ENCODE measurements at regions of chr16 and their contacts with region 1.

Region 1: GRCh38 chr16:50024684-50025536 is at the start of gene CNEP1R1:
- DNase-seq: peak; percentile 99
- CTCF ChIP-seq: peak; percentile 100

Region 2: DNA sequence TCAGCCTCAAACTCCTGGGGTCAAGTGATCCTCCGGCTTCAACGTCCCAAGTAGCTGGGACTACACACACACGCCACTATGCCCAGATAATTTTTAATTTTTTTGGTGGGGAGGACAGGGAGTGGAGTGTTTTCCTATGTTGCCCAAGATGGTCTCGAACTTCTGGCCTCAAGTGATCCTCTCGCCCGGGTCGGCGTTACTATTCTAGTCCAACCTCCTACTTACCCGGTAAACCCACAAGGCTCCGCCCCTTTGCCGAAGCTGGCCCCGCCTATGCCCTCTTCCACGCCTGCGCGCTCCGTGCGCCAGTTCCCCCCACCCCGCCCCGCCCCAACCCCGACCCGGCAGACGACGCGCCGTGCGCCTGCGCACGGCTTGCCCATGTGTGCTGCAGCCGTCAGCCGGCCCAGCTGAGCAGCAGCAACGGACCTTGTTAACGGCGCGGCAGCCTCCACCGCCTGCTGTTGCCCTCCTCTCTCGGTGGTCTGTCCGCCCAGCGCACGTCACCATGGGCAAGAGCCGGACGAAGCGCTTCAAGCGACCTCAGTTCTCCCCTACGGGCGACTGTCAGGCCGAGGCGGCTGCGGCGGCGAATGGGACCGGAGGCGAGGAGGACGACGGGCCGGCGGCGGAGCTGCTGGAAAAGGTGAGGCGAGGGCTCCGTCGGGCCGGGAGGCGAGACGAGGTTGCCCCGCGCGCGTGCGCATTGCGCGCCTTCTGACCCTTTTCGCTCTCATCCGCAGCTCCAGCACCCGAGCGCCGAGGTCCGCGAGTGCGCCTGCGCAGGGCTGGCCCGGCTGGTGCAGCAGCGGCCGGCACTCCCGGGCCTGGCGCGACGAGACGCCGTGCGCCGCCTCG is 40.9 kb after region 1 on chr16 and contains the start of gene HEATR3:
- CTCF ChIA-PET with region 1: interaction called, 47 read pairs
- POLR2A ChIA-PET with region 1: no interaction called
- DNase-seq: peak; percentile 94
- CTCF ChIP-seq: no peak

Region 3: DNA sequence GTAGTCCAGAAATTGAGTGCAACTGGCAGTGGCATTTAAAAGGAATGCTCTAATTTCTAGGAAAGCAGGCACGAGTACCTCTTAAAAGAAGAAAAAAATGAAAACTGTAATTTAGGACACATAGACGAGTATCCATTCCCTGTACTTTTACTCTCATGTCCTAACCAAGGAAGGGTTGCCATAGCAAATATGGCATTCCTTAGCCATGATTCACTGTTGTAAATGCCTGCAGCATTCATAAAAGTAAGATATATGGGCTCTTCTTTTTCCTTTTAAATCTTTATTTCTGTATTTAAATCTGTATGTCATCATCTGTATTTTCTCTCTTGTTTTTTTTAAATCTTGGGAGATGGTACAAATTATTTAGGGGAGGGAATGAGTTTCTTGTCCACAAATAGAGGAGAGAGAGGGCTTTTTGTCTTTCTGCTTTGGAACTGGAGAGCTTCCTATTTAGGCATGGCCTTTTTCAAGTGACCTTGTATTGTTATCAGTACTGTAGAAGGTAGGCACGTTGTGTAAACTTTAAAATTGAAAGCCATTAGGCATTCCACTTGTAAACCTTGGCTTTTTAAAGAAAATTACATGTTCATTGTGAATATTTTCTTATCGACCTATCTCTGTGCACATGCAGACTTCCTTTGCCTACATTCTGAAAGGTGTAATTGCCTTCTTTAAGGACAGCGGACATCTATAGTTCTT is 178.2 kb after region 1 on chr16:
- CTCF ChIA-PET with region 1: interaction called, 177 read pairs
- POLR2A ChIA-PET with region 1: no interaction called
- DNase-seq: no peak
- CTCF ChIP-seq: no peak

Region 4: DNA sequence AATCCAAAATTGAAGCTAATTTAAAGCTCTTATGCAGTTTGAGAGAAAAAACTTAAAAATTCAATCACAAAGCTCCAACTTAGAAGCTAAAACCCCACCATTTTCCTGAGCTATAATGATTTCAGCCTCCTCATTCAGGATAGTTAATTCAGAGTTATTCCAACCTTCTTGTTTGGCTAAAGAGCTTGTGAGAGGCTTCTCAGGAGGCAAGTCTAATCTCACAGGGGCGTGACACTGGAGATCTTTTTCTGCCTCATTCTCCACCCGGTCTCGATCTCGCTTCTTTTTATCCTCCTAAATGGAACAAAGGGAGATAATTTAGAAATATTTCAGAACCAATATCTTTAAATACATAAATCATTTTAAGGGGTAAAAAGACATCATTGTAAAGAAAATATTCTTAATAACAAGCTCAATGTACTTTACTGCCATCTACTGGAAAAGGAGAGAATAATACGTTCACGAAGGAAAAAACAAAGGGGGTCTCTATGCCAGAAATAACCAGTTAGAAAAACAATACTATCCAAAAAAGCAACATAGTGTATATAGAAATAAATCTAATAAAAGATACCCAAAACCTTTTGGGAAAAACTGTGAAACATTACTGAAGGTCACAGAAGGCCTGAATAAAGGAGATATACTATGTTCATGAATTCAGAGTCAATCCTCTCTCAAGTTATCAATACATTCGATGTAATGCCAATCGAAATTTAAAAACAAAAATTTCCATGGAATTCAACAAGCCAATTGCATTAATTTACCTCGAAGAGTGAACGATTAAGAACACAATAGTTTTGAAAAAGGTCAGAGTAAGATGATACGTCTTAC is 329.9 kb after region 1 on chr16:
- CTCF ChIA-PET with region 1: interaction called, 31 read pairs
- POLR2A ChIA-PET with region 1: no interaction called
- DNase-seq: no peak
- CTCF ChIP-seq: peak; percentile 40

Region 5: GRCh38 chr16:50509521-50510341 is 484.8 kb after region 1 on chr16:
- CTCF ChIA-PET with region 1: interaction called, 11 read pairs
- POLR2A ChIA-PET with region 1: no interaction called
- DNase-seq: peak; percentile 51
- CTCF ChIP-seq: peak; percentile 64